AG04449 (cell line): ENCODE measurements at regions of chr4 and their contacts with region 1.

Region 1: DNA sequence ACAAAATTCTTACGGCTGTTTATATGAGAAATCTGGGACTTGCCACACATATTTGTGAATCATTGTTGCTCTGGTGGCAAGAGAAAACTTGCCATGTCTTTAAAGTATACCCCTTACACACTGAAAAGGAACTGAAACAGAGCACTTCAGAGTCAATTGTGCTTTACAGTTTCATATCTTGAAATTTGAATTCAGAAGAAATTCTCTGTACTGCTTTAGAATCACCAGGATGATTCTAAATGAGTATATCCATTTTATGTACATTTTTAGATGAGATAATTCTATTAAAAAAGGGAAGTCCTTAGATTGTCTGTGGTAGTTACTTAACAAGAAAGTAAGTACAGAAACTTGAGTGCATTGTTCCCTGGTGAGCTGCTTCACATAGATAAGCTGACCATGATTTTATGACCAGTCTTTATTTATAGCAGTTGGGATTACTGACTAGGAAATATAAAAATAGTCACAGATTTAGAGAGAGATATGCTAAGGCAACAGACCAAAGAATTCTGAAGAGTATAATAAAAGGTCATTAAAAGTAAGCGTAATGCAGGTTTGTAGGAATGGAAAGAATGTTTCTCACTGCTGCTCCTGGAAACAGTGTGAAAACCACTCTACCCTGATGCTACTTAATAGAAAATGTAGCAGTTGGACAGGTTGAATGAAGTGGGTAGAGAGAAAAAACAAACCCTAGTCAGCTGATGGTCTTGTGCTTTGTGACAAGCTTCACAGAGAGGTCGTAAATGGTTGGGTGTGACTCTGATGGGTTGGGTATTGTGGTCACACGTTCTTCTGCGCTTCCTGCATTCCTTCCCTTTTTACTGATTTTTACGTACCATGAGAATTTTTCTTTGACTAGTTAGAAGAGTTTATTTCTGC is 41.0 kb downstream of the FNIP2 start:
- DNase-seq: peak; percentile 98
- H3K4me3 ChIP-seq: no peak overlapping the region
- CTCF ChIP-seq: no peak

Region 2: GRCh38 chr4:158384407-158384806 is 425.4 kb before region 1 on chr4:
- CTCF ChIA-PET with region 1: no interaction called
- POLR2A ChIA-PET with region 1: no interaction called
- DNase-seq: no peak
- H3K4me3 ChIP-seq: no peak overlapping the region
- CTCF ChIP-seq: no peak

Region 3: GRCh38 chr4:158741326-158742025 is 68.4 kb before region 1 on chr4:
- CTCF ChIA-PET with region 1: no interaction called
- POLR2A ChIA-PET with region 1: no interaction called
- DNase-seq: no peak
- H3K4me3 ChIP-seq: no peak overlapping the region
- CTCF ChIP-seq: no peak

Region 4: DNA sequence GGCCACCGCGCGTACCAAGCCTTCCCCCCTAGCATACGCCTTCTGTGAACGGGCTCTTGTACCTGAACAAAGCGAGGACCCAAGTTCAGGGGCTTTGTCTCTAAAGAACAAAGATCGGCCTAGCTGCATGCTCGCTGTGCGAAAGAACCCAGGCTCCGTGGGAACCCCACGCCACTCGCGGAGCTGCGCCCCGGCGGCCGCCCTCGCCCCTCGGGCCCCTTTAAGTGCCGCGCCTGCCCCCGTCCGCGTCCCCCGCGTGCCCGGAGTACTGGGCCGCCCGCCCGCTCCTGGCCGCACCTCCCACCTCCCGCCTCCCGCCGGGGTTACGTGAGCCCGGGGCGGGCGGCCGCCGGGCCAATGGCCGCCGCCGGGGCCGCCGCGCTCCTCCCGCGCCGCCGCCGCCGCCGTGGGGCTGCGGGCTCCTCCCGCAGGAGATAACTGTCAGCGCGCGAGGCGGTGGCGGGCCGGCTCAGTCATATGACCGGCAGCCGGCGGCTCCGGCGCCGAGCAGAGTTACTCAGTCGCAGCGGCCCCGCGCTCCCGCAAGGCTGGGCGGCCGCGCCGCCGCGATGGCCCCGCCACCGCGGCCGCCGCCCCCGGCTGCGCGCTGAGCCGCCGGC is 41.2 kb before region 1 on chr4 and contains the start of gene FNIP2:
- CTCF ChIA-PET with region 1: no interaction called
- POLR2A ChIA-PET with region 1: interaction called, 10 read pairs
- DNase-seq: no peak
- H3K4me3 ChIP-seq: peak within 1 kb of the TSS; percentile 80
- CTCF ChIP-seq: no peak

Region 5: DNA sequence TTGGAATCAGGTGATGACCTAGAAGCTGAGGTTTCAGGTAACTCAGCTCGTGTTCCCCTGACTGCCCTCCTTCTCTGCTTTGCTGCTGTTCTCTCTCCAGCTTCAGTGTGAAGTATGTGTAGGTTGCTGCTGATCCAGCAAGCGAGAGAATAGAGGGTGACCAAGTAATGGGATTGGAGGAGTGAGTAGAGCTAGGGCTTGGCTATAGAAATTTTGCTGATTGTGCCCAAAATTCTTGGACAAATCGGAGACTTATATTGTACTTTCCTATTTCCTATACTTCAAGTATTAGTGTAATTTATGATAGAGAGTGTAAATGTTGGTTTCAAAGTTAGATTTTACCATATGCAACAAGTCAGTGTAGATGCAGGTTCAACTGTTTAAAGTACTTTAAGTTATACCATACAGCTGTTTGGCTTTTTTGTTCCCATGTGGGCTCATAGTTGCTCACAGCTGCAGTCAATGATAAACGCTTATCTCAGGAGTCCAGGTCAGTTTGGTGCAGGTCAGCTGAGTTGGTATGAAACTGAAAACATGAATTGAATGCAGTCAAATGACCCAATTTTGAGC is 341.1 kb after region 1 on chr4:
- CTCF ChIA-PET with region 1: no interaction called
- POLR2A ChIA-PET with region 1: no interaction called
- DNase-seq: no peak
- H3K4me3 ChIP-seq: no peak overlapping the region
- CTCF ChIP-seq: no peak